Dorsolateral prefrontal cortex (tissue), 120 donors: ENCODE measurements at regions of chr22 and their contacts with region 1.

Region 1: GRCh38 chr22:25777870-25778269 is 35.9 kb downstream of the MYO18B start:
- DNase-seq: peak in 3 of 10 donors; percentile 12 to 40 (median 29)
- H3K4me3 ChIP-seq: no peak overlapping the region
- H3K27ac ChIP-seq: no peak overlapping the region
- H3K27me3 ChIP-seq: peaks cover 0 to 3% (median 0%) of the 10 kb centered on the region in 45 donors
- CTCF ChIP-seq: peak in 43 of 56 donors; percentile 4 to 57 (median 36)

Region 2: GRCh38 chr22:25193548-25193947 is 584.3 kb before region 1 on chr22:
- intact Hi-C with region 1: loop called in 1 of 2 experiments (anchors 10 kb)
- DNase-seq: no peak
- H3K4me3 ChIP-seq: no peak overlapping the region
- H3K27ac ChIP-seq: peak overlapping the region in 19 of 59 donors; percentile 4 to 63 (median 40)
- H3K27me3 ChIP-seq: no peaks in the 10 kb centered on the region
- CTCF ChIP-seq: no peak

Region 3: GRCh38 chr22:25465949-25466348 is 311.9 kb before region 1 on chr22:
- intact Hi-C with region 1: loop called (anchors 2 to 5 kb)
- DNase-seq: no peak
- H3K4me3 ChIP-seq: no peak overlapping the region
- H3K27ac ChIP-seq: no peak overlapping the region
- H3K27me3 ChIP-seq: no peaks in the 10 kb centered on the region
- CTCF ChIP-seq: no peak

Region 4: GRCh38 chr22:25494774-25495173 is 283.1 kb before region 1 on chr22:
- intact Hi-C with region 1: no loop called
- DNase-seq: no peak
- H3K4me3 ChIP-seq: no peak overlapping the region
- H3K27ac ChIP-seq: peak overlapping the region in 13 of 59 donors; percentile 20 to 75 (median 52)
- H3K27me3 ChIP-seq: no peaks in the 10 kb centered on the region
- CTCF ChIP-seq: no peak

Region 5: GRCh38 chr22:25754527-25755202 is 23.2 kb before region 1 on chr22:
- intact Hi-C with region 1: no loop called
- DNase-seq: peak in 1 of 10 donors; percentile 62
- H3K4me3 ChIP-seq: no peak overlapping the region
- H3K27ac ChIP-seq: no peak overlapping the region
- H3K27me3 ChIP-seq: peaks cover 0 to 3% (median 0%) of the 10 kb centered on the region in 45 donors
- CTCF ChIP-seq: no peak

Region 6: DNA sequence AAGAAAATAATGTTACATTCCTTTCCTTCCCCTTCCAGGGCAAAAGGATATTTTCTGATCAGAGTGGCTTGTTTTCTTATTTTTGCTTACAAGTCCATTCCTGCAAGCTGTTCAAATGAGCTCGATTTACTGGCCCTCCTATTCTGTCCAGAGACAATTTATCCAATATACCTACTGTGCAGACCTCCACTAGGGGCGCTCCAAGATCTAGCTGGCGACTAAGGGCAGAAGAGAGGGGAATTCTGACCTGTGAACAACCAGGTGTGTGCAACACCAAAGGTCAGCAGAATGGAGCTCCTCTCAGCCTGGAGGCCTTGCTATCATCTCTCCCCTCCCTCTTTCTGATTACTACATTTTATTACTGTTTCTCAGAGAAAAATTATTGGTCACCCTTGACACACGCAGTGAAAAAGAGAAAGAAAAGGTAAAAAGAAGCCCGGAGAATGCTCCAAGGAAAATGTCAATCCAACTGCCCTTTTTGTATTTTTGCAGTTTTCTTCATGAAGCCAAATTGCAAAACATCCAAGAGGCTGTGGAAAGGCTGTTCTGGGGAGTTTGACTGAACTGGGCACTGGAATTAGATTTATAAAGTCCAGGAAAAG is 394.6 kb after region 1 on chr22:
- intact Hi-C with region 1: loop called in 1 of 2 experiments (anchors 5 kb)
- DNase-seq: peak in 8 of 10 donors; percentile 39 to 81 (median 59)
- H3K4me3 ChIP-seq: peak overlapping the region in 24 of 59 donors; percentile 13 to 79 (median 70)
- H3K27ac ChIP-seq: peak overlapping the region in 2 of 59 donors; percentile 12 to 51
- H3K27me3 ChIP-seq: peaks cover 0 to 53% (median 7%) of the 10 kb centered on the region in 45 donors
- CTCF ChIP-seq: peak; percentile 17 to 76 (median 65)

Region 7: DNA sequence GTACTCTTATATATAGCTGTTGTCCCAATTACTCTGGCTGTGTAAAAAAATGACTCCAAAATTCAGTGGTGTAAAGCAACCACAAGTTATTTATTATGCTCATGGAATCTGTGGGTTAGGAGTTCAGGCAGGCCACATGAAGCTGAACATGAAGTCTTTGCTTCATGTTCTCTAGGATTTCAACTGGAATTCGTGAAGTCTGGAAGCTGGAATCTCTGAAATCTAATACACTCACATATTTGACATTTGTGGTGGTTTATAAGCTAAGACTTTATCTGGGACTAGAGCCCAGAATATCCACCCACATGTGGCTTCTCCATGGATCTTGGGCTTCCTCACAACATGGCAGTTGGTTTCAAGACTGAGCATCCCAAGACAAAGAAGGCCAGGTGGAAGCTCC is 1310.2 kb after region 1 on chr22:
- intact Hi-C with region 1: no loop called
- DNase-seq: no peak
- H3K4me3 ChIP-seq: no peak overlapping the region
- H3K27ac ChIP-seq: no peak overlapping the region
- H3K27me3 ChIP-seq: peaks cover 0 to 39% (median 0%) of the 10 kb centered on the region in 45 donors
- CTCF ChIP-seq: no peak